ENCODE measurements at regions of chr10 and their contacts with region 1.

Region 1: DNA sequence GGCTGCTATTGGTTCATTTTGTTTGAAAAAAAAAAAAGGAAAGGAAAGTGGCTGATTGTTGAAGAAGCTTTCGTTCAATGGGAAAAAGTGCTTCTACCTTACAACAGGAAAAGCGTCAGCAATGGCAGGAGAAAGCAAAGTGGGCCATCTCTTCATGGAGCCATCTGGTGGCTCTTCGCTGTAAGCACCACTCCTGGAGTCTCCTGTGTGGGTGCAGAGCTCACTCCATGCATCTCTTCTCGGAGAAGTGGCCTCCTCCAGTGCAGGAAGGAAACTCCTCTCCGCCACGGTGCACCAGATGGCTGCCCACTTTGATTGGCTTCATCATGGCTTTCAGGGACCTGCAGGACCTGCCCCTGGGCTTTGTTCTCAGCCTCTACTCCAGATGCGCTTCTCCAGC is 250.9 kb downstream of the PTEN start:
- DNase-seq: peak; percentile 50
- CTCF ChIP-seq: peak; percentile 78

Region 2: GRCh38 chr10:88091490-88092105 is 22.8 kb before region 1 on chr10:
- CTCF ChIA-PET with region 1: interaction called, 33 read pairs
- POLR2A ChIA-PET with region 1: no interaction called
- DNase-seq: peak; percentile 68
- CTCF ChIP-seq: no peak

Region 3: DNA sequence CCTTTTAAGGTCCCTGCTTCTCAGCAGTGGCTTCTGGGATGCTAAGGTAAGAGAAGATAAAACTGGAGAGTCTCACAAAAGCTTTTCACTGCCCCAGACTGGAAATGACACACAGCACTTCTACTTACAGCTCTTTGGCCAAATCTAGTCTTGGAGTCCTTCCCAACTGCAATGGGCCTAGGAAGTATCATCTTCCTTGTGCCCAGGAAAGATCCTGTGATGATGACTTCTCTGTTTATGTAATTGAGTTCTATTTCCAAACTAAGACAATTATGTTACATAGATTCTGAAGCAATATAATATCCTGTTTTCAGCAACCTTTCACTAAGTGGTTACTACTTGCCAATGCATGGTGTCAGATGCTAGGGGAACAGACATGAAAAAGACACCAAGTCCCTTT is 16.8 kb before region 1 on chr10:
- CTCF ChIA-PET with region 1: interaction called, 33 read pairs
- POLR2A ChIA-PET with region 1: no interaction called
- DNase-seq: no peak
- CTCF ChIP-seq: no peak

Region 4: GRCh38 chr10:88129013-88129412 is 14.6 kb after region 1 on chr10:
- CTCF ChIA-PET with region 1: interaction called, 20 read pairs
- POLR2A ChIA-PET with region 1: no interaction called
- DNase-seq: no peak
- CTCF ChIP-seq: no peak

Region 5: GRCh38 chr10:88138319-88138848 is 24.0 kb after region 1 on chr10:
- CTCF ChIA-PET with region 1: interaction called, 17 read pairs
- POLR2A ChIA-PET with region 1: no interaction called
- DNase-seq: peak; percentile 69
- CTCF ChIP-seq: no peak